AG04449 (cell line): ENCODE measurements at regions of chr16 and their contacts with region 1.

Region 1: GRCh38 chr16:2009789-2010510 is at the start of gene ZNF598:
- DNase-seq: no peak
- H3K4me3 ChIP-seq: peak within 1 kb of the TSS; percentile 83
- CTCF ChIP-seq: no peak

Region 2: GRCh38 chr16:1826691-1827575 is 183.0 kb before region 1 on chr16 and contains the starts of genes FAHD1 and HAGH:
- CTCF ChIA-PET with region 1: no interaction called
- POLR2A ChIA-PET with region 1: no interaction called
- DNase-seq: peak; percentile 75
- H3K4me3 ChIP-seq: peak within 1 kb of the TSS; percentile 99
- CTCF ChIP-seq: no peak

Region 3: DNA sequence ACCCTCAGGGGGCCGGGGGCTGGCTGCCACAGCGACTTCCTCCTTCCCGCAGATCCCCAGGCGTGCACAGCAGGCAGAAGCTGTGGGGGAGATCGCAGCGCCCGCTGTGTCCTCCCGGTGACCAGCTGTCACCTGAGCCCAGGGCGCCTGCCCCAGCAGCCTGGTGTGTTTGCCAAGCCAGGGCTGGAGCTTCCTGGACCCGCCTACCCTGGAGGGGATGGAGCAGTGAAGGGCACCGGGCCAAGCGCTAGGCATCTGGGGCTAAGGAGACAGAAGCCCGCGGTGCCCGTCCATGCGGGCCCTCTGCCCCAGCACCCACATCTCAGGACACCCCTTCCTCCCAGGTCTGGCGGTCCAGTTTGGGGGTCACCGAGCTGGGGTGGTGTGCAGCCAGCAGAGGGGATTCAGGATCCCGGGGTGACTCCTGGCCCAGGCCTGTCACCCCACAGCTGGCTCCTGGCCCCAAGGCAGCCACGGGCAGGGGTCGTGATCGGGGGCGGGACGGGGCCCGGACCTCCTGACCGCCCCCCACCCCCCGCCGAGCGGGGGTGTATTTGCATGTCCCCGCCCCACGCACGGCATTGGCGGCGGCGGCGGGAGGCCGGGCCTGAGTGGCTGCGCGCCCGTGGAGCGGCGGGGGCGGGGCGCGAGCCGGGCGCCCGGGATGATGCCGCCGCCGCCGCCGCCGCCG is 138.2 kb after region 1 on chr16 and contains the start of gene RAB26:
- CTCF ChIA-PET with region 1: interaction called, 176 read pairs
- POLR2A ChIA-PET with region 1: interaction called, 3 read pairs
- DNase-seq: no peak
- H3K4me3 ChIP-seq: peak within 1 kb of the TSS; percentile 48
- CTCF ChIP-seq: no peak